HepG2 (cell line): ENCODE measurements at regions of chr17 and their contacts with region 1.

Region 1: GRCh38 chr17:35969558-35970380 is 11.5 kb downstream of the CCL16 start:
- DNase-seq: peak; percentile 82
- ATAC-seq: peak; percentile 36
- H3K4me3 ChIP-seq: peak overlapping the region in 1 of 3 experiments; percentile 15; a peak in 2 of 6 replicates
- H3K27ac ChIP-seq: no peak overlapping the region
- H3K4me1 ChIP-seq: peaks cover 69% of the 10 kb centered on the region
- H3K27me3 ChIP-seq: no peaks in the 10 kb centered on the region
- CTCF ChIP-seq: peak; percentile 94
- EP300 ChIP-seq: no peak
- POLR2A ChIP-seq: no peak
- RAD21 ChIP-seq: peak; percentile 92

Region 2: DNA sequence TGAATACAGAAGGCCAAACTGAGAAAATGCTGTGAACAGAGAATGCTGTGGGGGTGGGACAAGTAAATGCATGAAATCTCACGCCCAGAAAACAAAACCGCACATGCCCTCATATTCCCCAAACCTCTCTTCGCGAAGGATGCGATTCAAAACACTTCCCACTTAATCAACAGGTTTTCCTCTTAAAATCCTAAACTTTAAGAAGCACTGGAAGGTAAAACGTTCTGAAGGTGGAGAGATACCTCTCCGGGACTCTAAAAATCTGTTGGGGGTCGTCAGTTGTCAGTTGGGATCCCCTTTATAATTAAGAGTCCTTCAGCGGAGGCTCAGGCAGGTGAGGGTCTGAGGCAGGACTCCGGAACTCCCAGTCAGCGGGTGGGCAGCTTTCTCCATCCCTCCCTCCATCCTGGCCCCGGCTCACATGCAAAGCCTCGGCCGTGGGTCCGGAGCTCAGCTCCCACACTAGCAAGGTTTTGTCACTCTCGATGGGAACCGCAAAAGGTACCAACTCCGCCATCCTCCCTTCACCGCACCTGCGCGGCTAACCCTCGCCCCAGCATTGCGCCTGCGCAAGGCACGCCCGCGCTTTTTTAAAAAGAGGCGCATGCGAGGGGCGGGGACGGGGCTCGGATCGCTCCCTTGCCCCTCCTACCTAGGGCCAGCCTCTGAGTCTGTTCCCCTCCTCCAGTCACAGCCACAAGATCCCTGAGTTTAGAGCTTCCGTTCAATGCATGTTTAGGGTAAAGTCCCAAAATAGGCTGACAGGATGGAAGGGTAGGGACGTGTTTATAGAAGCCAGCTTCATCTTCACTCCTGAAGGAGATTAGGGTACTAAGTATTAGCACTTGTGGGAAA is 39.3 kb before region 1 on chr17 and contains the start of gene RDM1:
- CTCF ChIA-PET with region 1: no interaction called
- POLR2A ChIA-PET with region 1: no interaction called
- in situ Hi-C with region 1: no loop called
- intact Hi-C with region 1: no loop called
- DNase-seq: no peak
- ATAC-seq: peak; percentile 65
- H3K4me3 ChIP-seq: peak within 1 kb of the TSS in 2 of 3 experiments; percentile 37 to 49; a peak in 3 of 6 replicates
- H3K27ac ChIP-seq: no peak within 1 kb of the TSS
- H3K4me1 ChIP-seq: no peaks in the 10 kb centered on the region
- H3K27me3 ChIP-seq: peaks cover 0 to 6% of the 10 kb centered on the region in 2 experiments; a peak in 1 of 5 replicates
- CTCF ChIP-seq: no peak
- EP300 ChIP-seq: no peak
- POLR2A ChIP-seq: no peak
- RAD21 ChIP-seq: no peak
- total RNA-seq, gene RDM1: 0.40 TPM in 1 of 2 replicates, not detected in the other

Region 3: GRCh38 chr17:35981908-35982330 is 12.2 kb after region 1 on chr17:
- CTCF ChIA-PET with region 1: interaction called, 7 read pairs
- POLR2A ChIA-PET with region 1: interaction called, 197 read pairs
- in situ Hi-C with region 1: no loop called
- intact Hi-C with region 1: loop called (anchors 1 kb)
- DNase-seq: peak; percentile 75
- ATAC-seq: peak; percentile 86
- H3K4me3 ChIP-seq: peak overlapping the region in 1 of 3 experiments; percentile 65; a peak in 2 of 6 replicates
- H3K27ac ChIP-seq: peak overlapping the region; percentile 66
- H3K4me1 ChIP-seq: peaks cover 78% of the 10 kb centered on the region
- H3K27me3 ChIP-seq: no peaks in the 10 kb centered on the region; a peak in 1 of 5 replicates
- CTCF ChIP-seq: peak; percentile 87
- EP300 ChIP-seq: peak in 1 of 2 experiments; percentile 48; a peak in 1 of 4 replicates
- POLR2A ChIP-seq: no peak
- RAD21 ChIP-seq: peak; percentile 88

Region 4: GRCh38 chr17:36001862-36002603 is 32.3 kb after region 1 on chr17:
- CTCF ChIA-PET with region 1: interaction called, 34 read pairs
- POLR2A ChIA-PET with region 1: interaction called, 115 read pairs
- in situ Hi-C with region 1: loop called (anchors 5 kb)
- intact Hi-C with region 1: loop called (anchors 1 kb)
- DNase-seq: peak; percentile 96
- ATAC-seq: peak; percentile 76
- H3K4me3 ChIP-seq: peak overlapping the region; percentile 73 to 78 (median 76)
- H3K27ac ChIP-seq: peak overlapping the region; percentile 88
- H3K4me1 ChIP-seq: peaks cover 69% of the 10 kb centered on the region
- H3K27me3 ChIP-seq: no peaks in the 10 kb centered on the region; a peak in 1 of 5 replicates
- CTCF ChIP-seq: no peak
- EP300 ChIP-seq: 0 out of 4 replicates have a peak, but pooled peaks have one; percentile 36 to 62
- POLR2A ChIP-seq: peak; percentile 80 to 92
- RAD21 ChIP-seq: no peak

Region 5: DNA sequence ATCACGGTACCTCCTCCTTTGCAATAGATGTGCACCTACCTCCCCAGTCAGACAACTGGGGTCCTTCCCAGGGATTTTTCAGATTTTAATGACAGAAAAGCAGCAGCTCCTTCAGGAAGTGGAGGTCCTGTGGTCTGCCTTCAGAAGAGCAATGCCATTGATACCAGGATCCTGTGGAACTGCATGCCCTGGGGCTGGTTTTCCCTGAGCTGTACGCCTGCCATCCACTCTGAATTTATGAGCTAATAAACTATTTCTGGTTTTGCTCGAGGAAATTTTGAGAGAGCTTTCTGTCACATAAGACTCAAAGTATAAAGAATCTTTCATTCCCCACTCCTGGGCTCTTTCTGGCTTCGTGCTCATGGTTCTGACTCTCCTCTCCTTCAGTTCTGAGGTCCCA is 58.0 kb after region 1 on chr17:
- CTCF ChIA-PET with region 1: no interaction called
- POLR2A ChIA-PET with region 1: no interaction called
- in situ Hi-C with region 1: no loop called
- intact Hi-C with region 1: no loop called
- DNase-seq: no peak
- ATAC-seq: no peak
- H3K4me3 ChIP-seq: no peak overlapping the region
- H3K27ac ChIP-seq: no peak overlapping the region
- H3K4me1 ChIP-seq: no peaks in the 10 kb centered on the region
- H3K27me3 ChIP-seq: no peaks in the 10 kb centered on the region
- CTCF ChIP-seq: no peak
- EP300 ChIP-seq: no peak
- POLR2A ChIP-seq: no peak
- RAD21 ChIP-seq: no peak

Region 6: GRCh38 chr17:36072431-36073121 is 102.8 kb after region 1 on chr17:
- CTCF ChIA-PET with region 1: interaction called, 28 read pairs
- POLR2A ChIA-PET with region 1: interaction called, 14 read pairs
- in situ Hi-C with region 1: loop called (anchors 5 kb)
- intact Hi-C with region 1: loop called (anchors 1 kb)
- DNase-seq: peak; percentile 52
- ATAC-seq: peak; percentile 77
- H3K4me3 ChIP-seq: no peak overlapping the region
- H3K27ac ChIP-seq: no peak overlapping the region
- H3K4me1 ChIP-seq: no peaks in the 10 kb centered on the region
- H3K27me3 ChIP-seq: peaks cover 0 to 16% of the 10 kb centered on the region in 2 experiments; a peak in 2 of 5 replicates
- CTCF ChIP-seq: peak; percentile 81
- EP300 ChIP-seq: no peak
- POLR2A ChIP-seq: no peak
- RAD21 ChIP-seq: peak; percentile 65; the same call in 1 of the 2 replicates

Region 7: DNA sequence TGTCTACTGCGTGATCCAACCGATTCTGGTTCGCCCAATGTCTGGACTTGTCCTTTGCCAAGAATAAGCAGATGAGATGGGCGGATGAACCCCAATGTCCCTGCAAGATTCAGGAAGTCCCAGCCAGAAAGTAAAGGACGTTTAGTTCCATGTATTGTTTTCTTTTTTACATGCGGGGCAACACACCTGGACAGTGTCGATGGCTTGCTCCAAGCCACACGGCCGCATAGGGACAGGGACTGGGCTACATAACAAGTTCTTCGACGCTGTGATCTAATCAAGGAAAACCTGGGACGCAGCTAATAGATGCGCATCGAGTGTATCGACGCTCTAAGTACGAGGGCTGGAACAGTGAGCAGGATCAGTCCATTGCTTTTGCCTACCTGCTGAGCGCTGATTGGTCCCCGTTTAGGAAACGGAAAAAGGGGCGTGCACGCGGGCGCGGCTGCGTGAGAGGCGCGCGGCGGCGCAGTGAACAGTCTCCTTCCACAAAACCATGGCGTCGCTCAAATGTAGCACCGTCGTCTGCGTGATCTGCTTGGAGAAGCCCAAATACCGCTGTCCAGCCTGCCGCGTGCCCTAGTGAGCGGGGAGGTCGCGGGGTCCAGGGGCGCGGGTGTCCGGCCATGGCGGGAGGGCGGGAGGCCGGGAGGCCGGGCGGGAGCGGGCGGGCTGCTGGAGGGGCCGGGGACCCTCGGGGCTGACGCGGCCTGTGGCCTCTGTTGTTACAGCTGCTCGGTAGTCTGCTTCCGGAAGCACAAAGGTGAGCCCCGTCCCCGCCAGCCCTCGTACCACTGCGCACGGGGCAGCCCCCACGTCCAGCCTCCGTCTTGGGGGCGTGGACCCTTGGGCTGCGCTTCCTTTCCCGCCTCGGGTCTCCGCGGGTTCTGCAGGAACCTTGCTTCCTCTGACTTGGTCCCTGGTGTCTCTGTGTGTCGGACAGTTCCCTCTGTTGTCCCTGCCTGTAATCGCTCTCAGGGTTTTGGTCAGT is 516.7 kb after region 1 on chr17 and contains the start of gene ZNHIT3:
- CTCF ChIA-PET with region 1: no interaction called
- POLR2A ChIA-PET with region 1: no interaction called
- in situ Hi-C with region 1: loop called (anchors 25 kb)
- intact Hi-C with region 1: no loop called
- DNase-seq: peak; percentile 89
- ATAC-seq: peak; percentile 92
- H3K4me3 ChIP-seq: peak within 1 kb of the TSS; percentile 83 to 100 (median 95)
- H3K27ac ChIP-seq: peak within 1 kb of the TSS; percentile 81
- H3K4me1 ChIP-seq: peaks cover 41% of the 10 kb centered on the region
- H3K27me3 ChIP-seq: peaks cover 0 to 9% of the 10 kb centered on the region in 2 experiments; a peak in 1 of 5 replicates
- CTCF ChIP-seq: no peak
- EP300 ChIP-seq: peak in 1 of 2 experiments; percentile 17; a peak in 1 of 4 replicates
- POLR2A ChIP-seq: peak; percentile 87 to 92
- RAD21 ChIP-seq: no peak
- total RNA-seq, gene ZNHIT3: 66.6 and 88.3 TPM in 2 replicates